ENCODE measurements at regions of chr12 and their contacts with region 1.

Region 1: DNA sequence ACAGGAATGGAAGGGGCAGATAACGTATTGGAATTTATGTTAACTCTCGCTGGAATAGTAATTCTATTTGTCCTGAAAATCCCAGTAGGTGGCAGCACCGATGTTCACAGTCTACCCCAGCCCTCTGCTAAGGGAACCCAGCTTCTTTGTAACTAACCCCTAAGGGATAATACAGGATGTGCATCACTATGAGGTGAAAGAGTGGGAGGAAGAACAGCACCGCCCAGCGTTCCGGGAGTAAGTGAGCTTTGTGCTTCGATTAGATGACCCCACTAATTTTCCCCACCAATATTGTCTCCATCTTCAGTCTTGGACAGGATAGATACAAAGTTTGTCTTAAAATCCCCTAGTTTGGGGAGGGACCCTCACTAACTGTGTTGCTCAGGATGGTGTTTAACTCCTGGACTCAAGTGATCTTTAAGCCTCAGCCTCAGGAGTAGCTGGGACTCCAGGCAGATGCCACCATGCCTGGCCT is 2.7 kb downstream of the SLC2A3 start:
- DNase-seq: peak; percentile 33 to 87 (median 83)
- ATAC-seq: peak; percentile 85
- H3K4me3 ChIP-seq: peak overlapping the region; percentile 98
- H3K4me3 Mint-ChIP-seq: no peak overlapping the region
- H3K27ac ChIP-seq: peak overlapping the region; percentile 84
- H3K27ac Mint-ChIP-seq: no peak overlapping the region
- H3K4me1 ChIP-seq: peaks cover 18 to 33% of the 10 kb centered on the region in 2 donors
- H3K4me1 Mint-ChIP-seq: peaks cover 25 to 37% (median 34%) of the 10 kb centered on the region in 7 donors
- H3K27me3 ChIP-seq: no peaks in the 10 kb centered on the region
- H3K27me3 Mint-ChIP-seq: no peaks in the 10 kb centered on the region

Region 2: GRCh38 chr12:7832059-7832696 is 101.1 kb before region 1 on chr12:
- CTCF ChIA-PET with region 1: interaction called, 3 read pairs
- POLR2A ChIA-PET with region 1: no interaction called
- intact Hi-C with region 1: loop called in 1 of 2 experiments (anchors 1 kb)
- DNase-seq: peak in 5 of 9 donors; percentile 8 to 34 (median 19)
- ATAC-seq: peak; percentile 91
- H3K4me3 ChIP-seq: no peak overlapping the region
- H3K4me3 Mint-ChIP-seq: no peak overlapping the region
- H3K27ac ChIP-seq: no peak overlapping the region
- H3K27ac Mint-ChIP-seq: no peak overlapping the region
- H3K4me1 ChIP-seq: no peaks in the 10 kb centered on the region
- H3K4me1 Mint-ChIP-seq: peaks cover 0 to 3% (median 0%) of the 10 kb centered on the region in 7 donors
- H3K27me3 ChIP-seq: no peaks in the 10 kb centered on the region
- H3K27me3 Mint-ChIP-seq: peaks cover 0 to 9% (median 0%) of the 10 kb centered on the region in 5 donors

Region 3: GRCh38 chr12:7907009-7907408 is 26.3 kb before region 1 on chr12:
- CTCF ChIA-PET with region 1: interaction called, 10 read pairs
- POLR2A ChIA-PET with region 1: no interaction called
- intact Hi-C with region 1: no loop called
- DNase-seq: no peak
- ATAC-seq: no peak
- H3K4me3 ChIP-seq: no peak overlapping the region
- H3K4me3 Mint-ChIP-seq: no peak overlapping the region
- H3K27ac ChIP-seq: no peak overlapping the region
- H3K27ac Mint-ChIP-seq: peak overlapping the region in 2 of 9 donors; percentile 41 to 42
- H3K4me1 ChIP-seq: no peaks in the 10 kb centered on the region
- H3K4me1 Mint-ChIP-seq: no peaks in the 10 kb centered on the region
- H3K27me3 ChIP-seq: no peaks in the 10 kb centered on the region
- H3K27me3 Mint-ChIP-seq: no peaks in the 10 kb centered on the region

Region 4: DNA sequence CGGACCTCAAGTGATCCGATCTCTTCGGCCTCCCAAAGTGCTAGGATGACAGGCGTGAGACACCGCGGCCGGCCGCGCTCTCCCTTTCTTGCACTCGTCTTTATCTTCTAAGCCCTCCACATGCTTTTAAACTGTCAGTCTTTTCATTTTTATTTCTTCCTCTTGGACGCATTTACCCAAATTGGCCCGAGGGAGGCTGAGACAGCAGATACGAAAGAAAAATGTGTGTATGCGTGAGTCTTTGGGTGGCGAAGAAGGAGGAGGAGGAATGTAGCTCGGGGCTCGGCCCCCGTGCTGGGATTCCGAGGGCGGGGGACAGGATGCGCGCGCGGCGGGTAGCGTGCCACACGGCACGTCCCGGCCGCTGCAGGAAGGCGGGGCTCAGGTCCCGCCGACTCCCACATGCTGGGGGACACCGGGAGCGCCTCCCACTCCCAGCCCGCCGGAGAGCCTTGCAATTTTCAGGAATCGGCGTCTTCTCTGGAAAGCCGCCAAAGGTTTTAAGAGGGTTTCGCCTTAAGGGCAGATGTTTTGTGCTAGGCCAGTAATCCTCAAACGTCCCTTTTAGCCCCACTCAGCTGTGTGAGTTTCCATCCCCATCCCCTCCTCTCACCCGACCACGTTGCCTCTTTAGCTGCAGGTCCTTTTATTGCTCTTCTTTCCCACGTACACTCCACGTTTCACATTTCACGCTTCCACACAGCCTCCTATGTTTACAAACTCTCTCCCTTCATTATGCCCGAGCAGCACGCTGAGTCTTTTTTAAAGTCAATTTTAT is 37.4 kb after region 1 on chr12:
- CTCF ChIA-PET with region 1: interaction called, 19 read pairs
- POLR2A ChIA-PET with region 1: interaction called, 102 read pairs
- intact Hi-C with region 1: loop called (anchors 1 kb)
- DNase-seq: peak; percentile 68 to 91 (median 85)
- ATAC-seq: peak; percentile 93
- H3K4me3 ChIP-seq: peak overlapping the region; percentile 75
- H3K4me3 Mint-ChIP-seq: peak overlapping the region; percentile 82 to 96 (median 90)
- H3K27ac ChIP-seq: peak overlapping the region; percentile 99
- H3K27ac Mint-ChIP-seq: peak overlapping the region; percentile 92 to 99 (median 98)
- H3K4me1 ChIP-seq: peaks cover 13 to 14% of the 10 kb centered on the region in 2 donors
- H3K4me1 Mint-ChIP-seq: peaks cover 17 to 37% (median 33%) of the 10 kb centered on the region in 7 donors
- H3K27me3 ChIP-seq: no peaks in the 10 kb centered on the region
- H3K27me3 Mint-ChIP-seq: no peaks in the 10 kb centered on the region

Region 5: GRCh38 chr12:7995266-7995963 is 62.1 kb after region 1 on chr12:
- CTCF ChIA-PET with region 1: interaction called, 74 read pairs
- POLR2A ChIA-PET with region 1: interaction called, 61 read pairs
- intact Hi-C with region 1: loop called (anchors 1 kb)
- DNase-seq: peak; percentile 39 to 89 (median 84)
- ATAC-seq: peak; percentile 100
- H3K4me3 ChIP-seq: no peak overlapping the region
- H3K4me3 Mint-ChIP-seq: no peak overlapping the region
- H3K27ac ChIP-seq: peak overlapping the region; percentile 60
- H3K27ac Mint-ChIP-seq: no peak overlapping the region
- H3K4me1 ChIP-seq: peaks cover 11 to 14% of the 10 kb centered on the region in 2 donors
- H3K4me1 Mint-ChIP-seq: peaks cover 9 to 28% (median 11%) of the 10 kb centered on the region in 7 donors
- H3K27me3 ChIP-seq: no peaks in the 10 kb centered on the region
- H3K27me3 Mint-ChIP-seq: no peaks in the 10 kb centered on the region

Region 6: DNA sequence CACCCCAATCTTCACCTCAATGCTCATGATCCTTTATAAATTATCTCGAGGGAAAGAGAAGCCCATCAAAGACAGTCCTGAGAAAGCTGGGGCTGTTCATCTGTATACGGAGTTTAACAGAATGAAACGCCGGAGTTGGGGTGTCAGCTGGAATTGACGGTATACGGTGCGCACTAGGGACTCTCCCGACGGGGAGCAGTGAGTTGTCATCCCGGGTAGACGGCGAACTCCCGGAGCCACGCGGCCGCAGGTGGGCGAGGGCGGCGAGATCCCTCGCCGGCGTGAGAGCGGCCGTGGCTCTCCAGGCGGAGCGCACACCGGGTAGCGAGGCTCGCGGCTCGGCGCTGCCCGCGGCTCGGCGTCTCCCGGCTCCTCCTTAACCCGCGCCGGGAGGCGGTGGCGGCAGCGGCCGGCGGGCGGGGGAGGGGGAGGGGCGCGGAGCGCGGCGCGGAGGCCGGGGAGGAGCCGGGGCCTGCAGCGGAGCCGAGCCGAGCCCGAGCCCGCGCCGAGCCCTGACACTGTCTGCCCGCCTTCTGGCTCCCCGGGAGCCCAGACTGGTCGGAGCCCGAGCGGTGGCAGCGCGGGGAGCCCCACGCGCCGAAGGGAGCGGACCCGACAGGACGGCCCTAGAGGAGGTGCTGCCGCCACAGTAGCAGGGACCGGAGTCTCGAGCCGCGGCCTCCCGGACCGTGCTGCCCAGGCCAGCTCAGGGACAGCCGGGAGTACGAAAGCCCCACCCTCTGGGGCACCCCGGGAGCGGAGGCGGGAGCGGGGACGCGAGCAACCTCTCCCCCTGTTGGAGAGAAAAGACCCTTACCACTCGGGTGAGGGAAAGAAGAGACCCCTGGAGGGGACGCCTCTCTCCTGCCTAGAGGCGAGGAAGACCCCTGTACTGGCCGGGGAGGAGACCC is 99.2 kb after region 1 on chr12 and contains the start of gene FOXJ2:
- CTCF ChIA-PET with region 1: interaction called, 10 read pairs
- POLR2A ChIA-PET with region 1: interaction called, 20 read pairs
- intact Hi-C with region 1: no loop called
- DNase-seq: peak; percentile 68 to 83 (median 78)
- ATAC-seq: peak; percentile 94
- H3K4me3 ChIP-seq: peak within 1 kb of the TSS; percentile 88
- H3K4me3 Mint-ChIP-seq: peak within 1 kb of the TSS; percentile 71 to 94 (median 91)
- H3K27ac ChIP-seq: peak within 1 kb of the TSS; percentile 100
- H3K27ac Mint-ChIP-seq: peak within 1 kb of the TSS; percentile 77 to 98 (median 94)
- H3K4me1 ChIP-seq: peaks cover 41 to 43% of the 10 kb centered on the region in 2 donors
- H3K4me1 Mint-ChIP-seq: peaks cover 49 to 63% (median 51%) of the 10 kb centered on the region in 7 donors
- H3K27me3 ChIP-seq: no peaks in the 10 kb centered on the region
- H3K27me3 Mint-ChIP-seq: peaks cover 0 to 2% (median 0%) of the 10 kb centered on the region in 5 donors
- total RNA-seq, gene FOXJ2: 19.8 to 30.2 (median 28.9) TPM

Region 7: DNA sequence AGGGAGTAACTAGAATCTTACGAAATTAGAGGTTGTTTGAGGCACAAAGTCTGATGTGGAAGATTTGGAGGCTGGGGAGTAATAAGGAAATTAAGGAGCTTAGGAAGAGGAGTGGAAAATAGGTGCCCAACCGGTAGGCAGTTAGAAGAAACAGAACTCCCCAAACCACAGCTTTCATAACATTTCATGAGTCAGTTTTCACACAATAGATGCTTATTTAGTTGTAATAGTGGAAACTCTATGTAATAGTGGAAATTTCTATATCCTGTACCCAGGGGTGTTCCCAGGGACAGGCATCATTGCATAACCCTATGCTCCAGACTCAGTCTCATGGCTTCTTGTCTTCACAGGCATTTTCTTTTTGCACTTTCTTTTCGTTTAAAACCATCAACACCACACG is 124.5 kb after region 1 on chr12:
- CTCF ChIA-PET with region 1: no interaction called
- POLR2A ChIA-PET with region 1: no interaction called
- intact Hi-C with region 1: no loop called
- DNase-seq: no peak
- ATAC-seq: peak; percentile 84
- H3K4me3 ChIP-seq: no peak overlapping the region
- H3K4me3 Mint-ChIP-seq: no peak overlapping the region
- H3K27ac ChIP-seq: no peak overlapping the region
- H3K27ac Mint-ChIP-seq: peak overlapping the region in 2 of 9 donors; percentile 51 to 52
- H3K4me1 ChIP-seq: no peaks in the 10 kb centered on the region
- H3K4me1 Mint-ChIP-seq: peaks cover 0 to 10% (median 4%) of the 10 kb centered on the region in 7 donors
- H3K27me3 ChIP-seq: no peaks in the 10 kb centered on the region
- H3K27me3 Mint-ChIP-seq: no peaks in the 10 kb centered on the region

Region 8: GRCh38 chr12:8078398-8078797 is 145.1 kb after region 1 on chr12:
- CTCF ChIA-PET with region 1: interaction called, 15 read pairs
- POLR2A ChIA-PET with region 1: interaction called, 27 read pairs
- intact Hi-C with region 1: loop called (anchors 1 to 2 kb)
- DNase-seq: peak in 8 of 9 donors; percentile 36 to 82 (median 78)
- ATAC-seq: peak; percentile 45
- H3K4me3 ChIP-seq: no peak overlapping the region
- H3K4me3 Mint-ChIP-seq: peak overlapping the region in 6 of 10 donors; percentile 18 to 49 (median 30)
- H3K27ac ChIP-seq: peak overlapping the region; percentile 94
- H3K27ac Mint-ChIP-seq: peak overlapping the region in 8 of 9 donors; percentile 86 to 100 (median 98)
- H3K4me1 ChIP-seq: peaks cover 21 to 40% of the 10 kb centered on the region in 2 donors
- H3K4me1 Mint-ChIP-seq: peaks cover 19 to 63% (median 41%) of the 10 kb centered on the region in 7 donors
- H3K27me3 ChIP-seq: no peaks in the 10 kb centered on the region
- H3K27me3 Mint-ChIP-seq: peaks cover 0 to 2% (median 0%) of the 10 kb centered on the region in 5 donors

Region 9: DNA sequence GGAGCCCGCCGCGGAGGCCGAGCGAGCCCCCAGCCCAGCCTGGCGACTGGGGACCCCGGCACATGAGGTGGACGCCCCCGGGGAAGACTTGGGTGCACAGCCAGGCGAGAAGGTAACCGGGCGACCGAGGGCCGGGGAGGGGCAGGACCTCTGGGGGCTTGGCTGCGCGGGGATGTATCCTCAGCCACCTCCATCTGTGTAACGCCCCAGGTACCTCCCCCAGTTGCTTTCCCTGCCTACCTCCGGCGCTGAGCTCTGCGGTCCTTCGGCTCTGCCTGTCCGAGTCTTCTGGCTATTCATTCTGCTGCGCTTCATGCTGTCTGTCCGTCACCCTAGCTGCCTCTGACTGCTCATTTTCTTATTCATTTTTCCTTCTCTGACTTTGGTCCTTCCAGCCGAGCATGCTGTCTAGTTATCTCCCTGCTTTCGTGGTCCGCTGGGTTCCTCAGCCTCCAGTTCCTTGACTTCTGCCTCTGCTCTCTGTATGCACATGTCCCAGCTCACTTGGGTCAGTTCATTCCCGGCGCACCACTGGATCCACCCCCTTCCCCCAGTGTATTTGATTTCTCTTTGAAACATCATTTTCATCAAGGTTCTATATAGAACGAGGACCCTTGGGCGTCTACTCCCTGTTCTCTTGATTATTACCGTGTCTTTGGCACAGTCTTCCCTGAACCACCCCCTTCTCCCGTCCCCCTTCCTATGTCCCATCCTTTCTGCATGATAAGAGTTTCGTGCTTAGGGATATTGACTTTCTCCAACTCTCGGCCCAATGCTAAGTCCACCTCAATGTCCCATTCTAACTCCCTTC is 981.6 kb after region 1 on chr12:
- CTCF ChIA-PET with region 1: no interaction called
- POLR2A ChIA-PET with region 1: no interaction called
- intact Hi-C with region 1: no loop called
- DNase-seq: peak; percentile 37 to 68 (median 60)
- ATAC-seq: peak; percentile 83
- H3K4me3 ChIP-seq: peak overlapping the region; percentile 73
- H3K4me3 Mint-ChIP-seq: no peak overlapping the region
- H3K27ac ChIP-seq: peak overlapping the region; percentile 79
- H3K27ac Mint-ChIP-seq: no peak overlapping the region
- H3K4me1 ChIP-seq: peaks cover 14 to 25% of the 10 kb centered on the region in 2 donors
- H3K4me1 Mint-ChIP-seq: peaks cover 7 to 20% (median 16%) of the 10 kb centered on the region in 7 donors
- H3K27me3 ChIP-seq: no peaks in the 10 kb centered on the region
- H3K27me3 Mint-ChIP-seq: peaks cover 0 to 16% (median 0%) of the 10 kb centered on the region in 5 donors